Activated CD4-positive, alpha-beta memory T cell treated with anti-CD3 and anti-CD28 coated beads, Interleukin-2, amount 10 ng/mL, durations not matched to agents 7 days and 5 days (primary cell): ENCODE measurements at regions of chr17 and their contacts with region 1.

Region 1: DNA sequence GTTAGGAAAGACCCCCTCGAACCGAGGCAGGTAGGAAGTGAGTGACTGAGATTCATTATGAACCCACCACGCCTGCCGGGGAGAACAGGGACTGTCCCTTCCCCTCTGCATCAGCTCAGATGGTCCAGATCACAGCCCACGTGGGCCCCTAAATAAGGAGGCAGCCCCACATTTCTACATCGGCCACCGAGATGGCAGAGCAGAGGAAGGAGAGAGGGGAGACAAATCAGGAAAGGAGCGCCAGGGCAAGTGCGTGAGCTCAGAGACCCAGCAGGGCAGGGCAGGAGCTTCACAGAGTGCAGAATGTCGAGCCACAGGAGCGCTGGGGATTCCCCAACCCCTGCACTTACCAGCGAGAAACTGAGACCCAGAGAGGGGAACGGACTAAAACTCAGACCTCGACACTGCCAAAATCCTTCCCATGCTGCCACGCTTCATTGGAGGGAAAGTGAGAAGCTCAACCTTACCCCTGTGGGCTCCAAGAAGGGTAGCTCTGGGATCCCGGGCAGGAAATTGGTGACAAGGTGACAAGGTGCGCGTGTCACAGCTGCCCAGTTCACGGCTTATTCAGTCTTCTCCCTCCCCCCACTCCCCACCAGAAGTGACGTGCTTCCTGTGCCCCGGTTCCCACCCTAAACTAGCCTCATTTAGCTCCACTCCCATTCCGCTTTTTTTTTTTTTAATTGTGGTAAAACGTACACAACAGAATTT is at the start of gene ICAM2:
- DNase-seq: peak; percentile 95
- H3K4me3 Mint-ChIP-seq: peak within 1 kb of the TSS; percentile 99
- H3K27ac Mint-ChIP-seq: peak within 1 kb of the TSS; percentile 100
- H3K4me1 Mint-ChIP-seq: peaks cover 66% of the 10 kb centered on the region
- H3K27me3 Mint-ChIP-seq: no peaks in the 10 kb centered on the region
- total RNA-seq, gene ICAM2: 118 to 122 TPM

Region 2: GRCh38 chr17:63919311-63919723 is 100.9 kb before region 1 on chr17:
- CTCF ChIA-PET with region 1: interaction called, 136 read pairs
- POLR2A ChIA-PET with region 1: interaction called, 27 read pairs
- DNase-seq: peak; percentile 79
- H3K4me3 Mint-ChIP-seq: no peak overlapping the region
- H3K27ac Mint-ChIP-seq: no peak overlapping the region
- H3K4me1 Mint-ChIP-seq: peaks cover 8% of the 10 kb centered on the region
- H3K27me3 Mint-ChIP-seq: peaks cover 19% of the 10 kb centered on the region

Region 3: GRCh38 chr17:63946440-63947367 is 73.5 kb before region 1 on chr17:
- CTCF ChIA-PET with region 1: interaction called, 22 read pairs
- POLR2A ChIA-PET with region 1: interaction called, 15 read pairs
- DNase-seq: peak; percentile 67
- H3K4me3 Mint-ChIP-seq: peak overlapping the region; percentile 37
- H3K27ac Mint-ChIP-seq: peak overlapping the region; percentile 71
- H3K4me1 Mint-ChIP-seq: peaks cover 22% of the 10 kb centered on the region
- H3K27me3 Mint-ChIP-seq: peaks cover 10% of the 10 kb centered on the region

Region 4: GRCh38 chr17:63998050-63998720 is 22.0 kb before region 1 on chr17 and contains the start of gene PRR29:
- CTCF ChIA-PET with region 1: interaction called, 31 read pairs
- POLR2A ChIA-PET with region 1: interaction called, 79 read pairs
- DNase-seq: peak; percentile 82
- H3K4me3 Mint-ChIP-seq: peak within 1 kb of the TSS; percentile 92
- H3K27ac Mint-ChIP-seq: peak within 1 kb of the TSS; percentile 76
- H3K4me1 Mint-ChIP-seq: peaks cover 66% of the 10 kb centered on the region
- H3K27me3 Mint-ChIP-seq: peaks cover 8% of the 10 kb centered on the region
- total RNA-seq, gene PRR29: 12.0 to 15.1 TPM

Region 5: GRCh38 chr17:64081802-64082799 is 61.9 kb after region 1 on chr17:
- CTCF ChIA-PET with region 1: interaction called, 12 read pairs
- POLR2A ChIA-PET with region 1: interaction called, 15 read pairs
- DNase-seq: peak; percentile 84
- H3K4me3 Mint-ChIP-seq: peak overlapping the region; percentile 54
- H3K27ac Mint-ChIP-seq: no peak overlapping the region
- H3K4me1 Mint-ChIP-seq: peaks cover 31% of the 10 kb centered on the region
- H3K27me3 Mint-ChIP-seq: no peaks in the 10 kb centered on the region